ENCODE measurements at regions of chr20 and their contacts with region 1.

Region 1: DNA sequence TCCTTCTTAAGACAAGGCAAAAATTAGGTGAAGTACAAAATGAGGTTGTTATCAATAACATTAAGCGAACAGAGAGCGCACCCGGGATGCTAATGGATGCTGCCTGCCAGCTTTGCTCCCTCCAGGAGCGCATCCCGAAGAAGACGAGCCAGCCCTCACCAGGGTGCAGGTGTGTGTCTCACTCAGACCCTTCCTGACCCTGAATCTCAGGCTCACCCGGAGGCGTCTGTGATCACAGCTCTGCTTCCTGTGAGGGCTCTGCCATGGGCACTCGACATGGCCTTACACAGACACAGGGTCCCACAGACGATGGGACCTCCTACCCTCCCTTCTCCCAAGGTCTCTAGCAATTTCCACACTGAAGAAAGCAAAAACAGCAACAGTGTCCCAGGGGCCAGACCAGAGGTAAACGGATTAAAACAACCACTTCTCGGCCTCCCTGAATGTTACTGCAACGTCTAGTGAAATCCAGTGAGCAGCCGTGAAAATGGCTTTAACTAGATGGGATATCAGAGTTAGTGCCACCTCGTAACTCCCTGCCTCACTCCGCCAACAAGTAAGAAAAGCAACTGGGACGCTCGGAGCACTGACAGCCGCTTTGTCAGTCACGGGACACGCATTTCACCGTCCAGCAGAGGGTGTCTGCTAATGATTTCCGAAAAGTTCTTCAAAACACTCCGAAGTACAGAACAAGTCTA is 11.7 kb downstream of the ZBTB46 start:
- DNase-seq: peak; percentile 44
- H3K4me3 ChIP-seq: peak overlapping the region; percentile 7
- H3K27ac ChIP-seq: peak overlapping the region; percentile 32
- H3K4me1 ChIP-seq: peaks cover 66% of the 10 kb centered on the region
- H3K27me3 ChIP-seq: no peaks in the 10 kb centered on the region
- CTCF ChIP-seq: peak; percentile 60

Region 2: GRCh38 chr20:63686492-63687321 is 132.7 kb before region 1 on chr20:
- intact Hi-C with region 1: no loop called
- DNase-seq: peak; percentile 78
- H3K4me3 ChIP-seq: peak overlapping the region; percentile 42
- H3K27ac ChIP-seq: peak overlapping the region; percentile 96
- H3K4me1 ChIP-seq: peaks cover 72% of the 10 kb centered on the region
- H3K27me3 ChIP-seq: no peaks in the 10 kb centered on the region
- CTCF ChIP-seq: no peak

Region 3: DNA sequence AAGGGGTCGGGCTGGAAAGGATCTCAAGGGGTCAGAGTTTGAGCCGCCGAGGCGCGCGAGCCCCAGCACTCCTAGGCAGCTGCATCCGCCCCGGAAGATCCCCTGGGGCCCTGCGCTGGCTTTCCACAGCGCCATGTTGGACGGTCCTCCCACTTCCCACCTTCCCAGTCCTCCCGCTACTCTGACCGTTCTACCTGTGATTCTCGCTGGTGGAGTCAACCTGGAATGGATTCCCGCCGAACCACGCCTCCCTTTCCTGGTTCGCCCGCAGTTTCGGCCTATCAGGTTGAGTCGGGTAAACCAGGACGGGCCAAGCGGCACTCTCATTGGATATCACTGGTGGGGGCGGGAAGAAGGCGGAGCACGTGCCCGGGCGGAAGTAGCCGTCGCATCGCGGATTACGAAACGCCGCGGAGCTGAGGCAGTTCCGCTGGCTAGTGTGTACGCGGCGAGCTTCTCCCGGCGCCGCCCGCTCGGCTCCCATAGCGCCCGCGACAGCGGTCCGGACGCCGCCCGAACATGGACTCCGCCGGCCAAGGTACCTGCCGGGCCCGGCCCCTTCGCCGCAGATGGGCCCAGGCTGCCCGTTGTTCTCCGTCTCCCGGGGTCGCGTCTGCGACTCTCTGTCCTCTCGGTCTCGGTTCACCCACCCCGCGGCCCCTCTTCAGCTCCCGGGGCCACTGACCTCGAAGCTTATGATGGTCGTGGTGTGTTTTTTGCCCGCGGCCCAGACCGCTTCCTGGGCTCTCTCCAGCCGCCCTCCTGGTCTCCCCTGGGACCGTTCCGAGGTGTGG is 45.7 kb after region 1 on chr20 and contains the start of gene TPD52L2:
- intact Hi-C with region 1: loop called (anchors 10 kb)
- DNase-seq: peak; percentile 98
- H3K4me3 ChIP-seq: peak within 1 kb of the TSS; percentile 98
- H3K27ac ChIP-seq: peak within 1 kb of the TSS; percentile 97
- H3K4me1 ChIP-seq: peaks cover 45% of the 10 kb centered on the region
- H3K27me3 ChIP-seq: no peaks in the 10 kb centered on the region
- CTCF ChIP-seq: no peak
- total RNA-seq, gene TPD52L2: 72.0 TPM

Measured in left ventricle myocardium inferior (tissue), 1 donor.